Transverse colon (tissue), 4 donors: ENCODE measurements at regions of chr2 and their contacts with region 1.

Region 1: GRCh38 chr2:53767405-53768241 is at the start of gene CHAC2:
- DNase-seq: peak; percentile 90
- H3K4me3 ChIP-seq: peak within 1 kb of the TSS; percentile 60 to 86 (median 66)
- H3K27ac ChIP-seq: peak within 1 kb of the TSS; percentile 75 to 86 (median 84)
- H3K4me1 ChIP-seq: peaks cover 0 to 32% (median 17%) of the 10 kb centered on the region in 4 donors
- H3K27me3 ChIP-seq: no peaks in the 10 kb centered on the region
- CTCF ChIP-seq: peak; percentile 56 to 74 (median 61)
- EP300 ChIP-seq: no peak
- POLR2A ChIP-seq: peak; percentile 23
- total RNA-seq, gene CHAC2: 1.4 to 2.1 (median 1.5) TPM

Region 2: DNA sequence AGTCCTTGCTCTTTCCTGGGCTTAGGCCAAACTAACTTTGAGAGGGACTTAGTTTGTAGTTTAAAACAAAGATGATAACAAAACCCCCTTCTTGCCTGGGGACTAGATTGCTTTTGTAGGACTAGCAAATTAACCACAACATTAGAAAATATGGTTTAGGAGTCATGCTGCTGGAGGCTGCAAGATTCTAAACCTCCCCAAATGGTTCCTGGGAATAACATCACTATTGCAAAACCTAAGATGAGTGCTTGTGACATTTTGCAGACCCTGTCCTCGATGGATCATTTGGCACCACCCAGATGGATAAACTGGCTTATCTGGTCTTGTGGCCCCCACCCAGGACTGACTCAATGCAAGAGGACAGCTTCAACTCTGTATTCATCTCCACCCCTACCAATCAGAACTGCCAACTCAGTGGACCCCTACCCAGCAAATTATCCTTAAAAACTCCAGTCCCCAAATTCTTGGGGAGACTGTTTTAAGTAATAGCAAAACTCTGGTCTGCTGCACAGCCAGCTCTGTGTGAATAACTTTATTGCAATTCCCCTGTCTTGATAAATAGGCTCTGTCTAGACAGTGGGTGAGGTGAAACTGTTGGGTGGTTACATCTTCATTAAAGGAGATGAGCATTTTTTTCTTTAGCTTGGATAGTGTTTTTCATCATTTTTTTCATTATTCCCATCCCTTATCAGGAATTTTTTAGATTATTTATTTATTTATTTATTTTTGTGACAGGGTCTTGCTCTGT is 747.4 kb after region 1 on chr2:
- in situ Hi-C with region 1: no loop called
- intact Hi-C with region 1: loop called (anchors 5 kb)
- DNase-seq: no peak
- H3K4me3 ChIP-seq: no peak overlapping the region
- H3K27ac ChIP-seq: no peak overlapping the region
- H3K4me1 ChIP-seq: peaks cover 0 to 12% (median 1%) of the 10 kb centered on the region in 4 donors
- H3K27me3 ChIP-seq: no peaks in the 10 kb centered on the region
- CTCF ChIP-seq: no peak
- EP300 ChIP-seq: no peak
- POLR2A ChIP-seq: no peak